Panc1 (cell line): ENCODE measurements at regions of chr1 and their contacts with region 1.

Region 1: DNA sequence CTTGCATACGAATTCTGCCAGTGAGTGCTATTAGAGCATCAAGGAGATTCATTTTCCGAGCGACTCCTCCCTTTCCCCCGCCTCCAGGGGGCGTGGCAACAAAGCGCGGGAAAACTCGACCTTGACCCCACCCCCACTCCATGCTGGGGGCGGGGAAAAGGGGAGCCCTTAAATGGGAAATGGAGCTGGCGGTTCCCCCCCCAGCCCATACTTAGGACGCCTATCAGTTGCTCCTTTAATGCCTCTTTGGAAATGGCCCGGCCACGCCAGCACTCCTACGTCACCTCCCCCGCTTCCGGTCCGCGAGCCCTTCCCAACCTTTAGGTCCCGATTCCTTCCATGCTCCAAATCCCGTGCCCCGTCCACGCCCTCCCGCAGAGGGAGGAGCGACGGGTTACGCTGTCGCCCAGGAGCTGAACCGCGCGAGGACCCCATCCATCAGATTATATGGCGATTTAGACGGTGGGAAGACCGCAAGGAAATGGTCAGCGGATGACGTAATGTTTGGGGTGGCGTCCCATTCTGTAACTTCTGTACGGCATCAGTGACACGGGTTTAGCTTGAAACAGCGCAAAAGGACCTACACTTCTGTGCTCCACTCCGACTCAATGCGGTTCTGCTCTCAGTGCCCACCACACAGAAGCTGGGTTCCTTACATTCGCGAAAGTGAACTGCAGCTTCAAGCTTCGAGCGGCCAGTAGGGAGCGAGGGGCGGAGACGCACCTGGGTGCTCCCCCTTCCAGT is 702 bp upstream of the ZNF687 start:
- DNase-seq: peak; percentile 91
- ATAC-seq: peak; percentile 77
- H3K4me3 ChIP-seq: peak overlapping the region; percentile 93 to 95
- H3K27ac ChIP-seq: peak overlapping the region; percentile 97
- H3K4me1 ChIP-seq: peaks cover 14% of the 10 kb centered on the region
- H3K27me3 ChIP-seq: no peaks in the 10 kb centered on the region
- CTCF ChIP-seq: no peak

Region 2: DNA sequence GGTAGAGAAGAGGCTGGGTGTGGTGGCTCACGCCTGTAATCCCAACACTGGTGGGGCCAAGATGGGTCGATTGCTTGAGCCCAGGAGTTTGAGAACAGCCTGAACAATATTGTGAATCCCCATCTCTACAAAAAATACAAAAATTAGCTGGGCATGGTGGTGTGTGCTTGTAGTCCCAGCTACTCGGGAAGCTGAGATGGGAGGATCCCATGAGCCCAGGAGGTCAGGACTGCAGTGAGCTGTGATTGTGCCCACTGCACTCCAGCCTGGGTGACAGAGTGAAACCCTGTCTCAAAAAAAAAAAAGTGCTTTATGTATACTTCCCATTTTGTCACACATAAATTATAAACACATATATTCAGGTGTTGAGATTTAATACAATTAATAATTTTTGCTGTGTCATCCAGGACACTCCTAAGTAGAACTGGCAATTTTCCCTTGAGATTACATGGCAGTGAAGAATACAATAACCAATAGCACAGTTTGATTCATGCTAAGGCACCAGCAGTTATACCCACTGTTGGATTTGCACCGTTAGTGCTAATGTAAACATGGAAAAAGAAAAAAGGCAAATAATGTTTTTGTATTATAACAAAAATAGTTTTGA is 195.3 kb before region 1 on chr1:
- CTCF ChIA-PET with region 1: no interaction called
- POLR2A ChIA-PET with region 1: interaction called, 19 read pairs
- in situ Hi-C with region 1: no loop called
- intact Hi-C with region 1: no loop called
- DNase-seq: no peak
- ATAC-seq: no peak
- H3K4me3 ChIP-seq: no peak overlapping the region
- H3K27ac ChIP-seq: no peak overlapping the region
- H3K4me1 ChIP-seq: no peaks in the 10 kb centered on the region
- H3K27me3 ChIP-seq: no peaks in the 10 kb centered on the region
- CTCF ChIP-seq: no peak